HEK293 (cell line): ENCODE measurements at regions of chr22 and their contacts with region 1.

Region 1: GRCh38 chr22:20885557-20886323 is 26.9 kb downstream of the SNAP29 start:
- H3K4me3 ChIP-seq: no peak overlapping the region
- H3K27ac ChIP-seq: no peak overlapping the region; the same call in 1 of the 2 replicates
- H3K4me1 ChIP-seq: no peaks in the 10 kb centered on the region
- CTCF ChIP-seq: peak; percentile 99

Region 2: DNA sequence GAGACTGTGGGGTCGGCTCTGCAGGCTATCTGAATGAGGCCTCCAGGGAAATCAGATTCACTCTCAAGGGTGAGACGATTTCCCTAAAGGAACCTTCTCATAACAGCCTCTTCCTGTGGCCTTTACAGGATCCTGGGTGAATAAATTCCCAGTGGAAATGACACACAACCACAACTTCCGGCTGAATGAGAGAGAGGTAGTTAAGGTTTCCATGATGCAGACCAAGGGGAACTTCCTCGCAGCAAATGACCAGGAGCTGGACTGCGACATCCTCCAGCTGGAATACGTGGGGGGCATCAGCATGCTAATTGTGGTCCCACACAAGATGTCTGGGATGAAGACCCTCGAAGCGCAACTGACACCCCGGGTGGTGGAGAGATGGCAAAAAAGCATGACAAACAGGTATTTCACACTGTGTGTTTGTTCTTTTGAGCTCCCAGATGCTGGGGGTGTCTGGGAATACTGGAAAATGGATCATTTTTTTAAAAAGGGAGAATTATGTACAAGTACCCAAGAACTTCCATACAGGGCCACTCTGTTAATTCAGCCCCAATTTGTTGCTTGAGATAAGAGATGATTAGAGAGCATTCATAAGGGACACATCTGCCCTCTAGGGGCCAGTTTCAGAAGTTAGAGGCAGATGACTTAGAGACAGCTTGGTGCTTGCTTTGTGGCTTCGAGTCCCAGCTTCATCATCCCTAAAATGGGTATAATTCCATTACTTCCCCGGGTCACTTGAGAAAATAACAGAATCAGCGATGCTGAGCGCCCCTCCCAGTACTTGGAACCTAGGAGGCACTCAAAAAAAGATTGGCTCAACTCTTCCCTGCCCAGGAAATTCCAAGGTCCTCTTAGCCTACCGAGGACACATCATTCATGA is 101.7 kb before region 1 on chr22:
- CTCF ChIA-PET with region 1: interaction called, 10 read pairs
- POLR2A ChIA-PET with region 1: no interaction called
- H3K4me3 ChIP-seq: no peak overlapping the region
- H3K27ac ChIP-seq: no peak overlapping the region
- H3K4me1 ChIP-seq: no peaks in the 10 kb centered on the region
- CTCF ChIP-seq: peak; percentile 34; the same call in 1 of the 2 replicates

Region 3: GRCh38 chr22:20867179-20868024 is 18.3 kb before region 1 on chr22:
- CTCF ChIA-PET with region 1: interaction called, 31 read pairs
- POLR2A ChIA-PET with region 1: interaction called, 6 read pairs
- H3K4me3 ChIP-seq: no peak overlapping the region
- H3K27ac ChIP-seq: no peak overlapping the region
- H3K4me1 ChIP-seq: no peaks in the 10 kb centered on the region
- CTCF ChIP-seq: no peak

Region 4: DNA sequence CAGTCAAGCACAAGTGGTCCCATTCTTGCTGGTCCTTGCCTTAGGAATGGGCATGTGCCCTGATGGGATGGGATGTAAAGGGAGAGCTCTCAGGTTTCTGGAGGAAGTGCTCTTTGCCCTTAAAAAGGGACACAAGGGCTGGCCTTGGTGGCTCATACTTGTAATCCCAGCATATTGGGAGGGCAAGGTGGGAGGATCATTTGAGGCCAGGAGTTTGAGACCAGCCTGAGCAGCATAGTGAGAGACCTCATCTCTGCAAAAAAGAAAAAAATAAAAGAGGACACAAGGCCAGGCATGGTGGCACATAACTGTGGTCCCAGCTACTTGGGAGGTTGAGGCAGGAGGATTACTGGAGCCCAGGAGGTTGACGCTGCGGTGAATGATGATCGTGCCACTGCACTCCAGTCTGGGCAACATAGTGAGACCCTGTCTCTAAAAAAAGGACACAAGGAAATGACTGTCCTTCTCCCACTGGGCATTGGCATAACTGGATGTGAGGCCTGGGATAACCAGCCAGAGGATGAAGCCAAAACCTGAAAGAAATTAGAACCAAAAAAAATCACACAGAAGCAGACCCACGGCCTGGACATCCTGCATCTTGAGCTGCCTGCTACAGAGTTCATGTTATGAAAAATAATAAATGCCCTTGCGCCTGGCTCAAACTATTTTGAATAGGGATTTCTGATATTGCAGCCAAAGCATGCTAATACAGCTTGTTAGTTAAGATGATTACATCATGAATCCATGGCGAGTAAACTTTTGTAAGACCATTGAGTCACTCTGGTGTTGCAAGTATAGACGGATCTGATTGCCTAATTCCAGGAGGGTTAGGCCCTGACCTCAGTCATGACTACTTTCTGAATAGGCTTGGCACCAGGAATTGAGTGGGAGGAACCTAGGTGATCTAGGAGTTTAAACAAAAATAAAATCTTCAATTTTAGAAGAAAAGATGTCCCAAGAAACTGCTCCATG is 18.6 kb after region 1 on chr22:
- CTCF ChIA-PET with region 1: interaction called, 18 read pairs
- POLR2A ChIA-PET with region 1: no interaction called
- H3K4me3 ChIP-seq: no peak overlapping the region
- H3K27ac ChIP-seq: no peak overlapping the region
- H3K4me1 ChIP-seq: no peaks in the 10 kb centered on the region
- CTCF ChIP-seq: no peak

Region 5: DNA sequence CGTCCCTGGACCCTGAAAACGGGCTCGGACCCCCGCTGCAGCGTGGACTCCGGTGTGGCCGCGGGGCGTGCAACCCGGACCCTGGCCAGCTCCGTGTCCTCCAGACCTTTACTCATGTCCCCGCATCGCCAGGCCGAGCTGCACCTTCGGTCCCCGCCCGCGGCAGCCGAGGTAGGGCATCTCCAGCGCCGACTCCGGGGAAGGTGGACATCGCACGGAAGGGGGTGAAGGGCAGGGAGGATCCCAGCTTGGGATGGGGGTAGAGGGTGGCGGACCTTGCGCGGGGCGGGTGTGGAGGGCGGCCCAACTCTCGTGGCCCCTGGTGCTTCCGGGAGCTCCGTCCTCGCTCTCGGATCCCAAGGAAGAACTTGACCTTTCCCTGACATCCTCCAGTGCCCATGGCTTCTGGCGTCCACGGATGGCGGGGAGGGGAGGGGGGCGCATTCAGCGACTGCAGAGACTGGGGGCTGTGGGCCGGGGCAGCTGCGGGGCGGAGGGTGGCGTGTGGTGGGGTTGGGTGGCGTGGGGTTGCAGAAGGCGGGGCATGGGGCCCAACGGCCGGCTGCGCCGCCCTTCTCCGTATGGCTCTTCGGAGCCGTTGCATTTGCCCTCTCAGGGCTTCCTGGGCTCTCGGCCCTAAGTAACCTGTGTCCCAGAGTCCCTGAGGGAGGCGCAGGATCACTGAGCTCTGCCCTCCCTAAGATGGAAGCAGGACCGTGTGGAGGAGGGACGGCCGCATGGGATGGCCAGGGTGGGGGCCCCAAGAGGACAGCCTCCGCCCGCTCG is 71.8 kb after region 1 on chr22:
- CTCF ChIA-PET with region 1: interaction called, 22 read pairs
- POLR2A ChIA-PET with region 1: no interaction called
- H3K4me3 ChIP-seq: peak overlapping the region; percentile 50
- H3K27ac ChIP-seq: no peak overlapping the region
- H3K4me1 ChIP-seq: no peaks in the 10 kb centered on the region
- CTCF ChIP-seq: no peak

Region 6: GRCh38 chr22:21001560-21002325 is 116.0 kb after region 1 on chr22 and contains the start of gene THAP7:
- CTCF ChIA-PET with region 1: interaction called, 6 read pairs
- POLR2A ChIA-PET with region 1: interaction called, 10 read pairs
- H3K4me3 ChIP-seq: peak within 1 kb of the TSS; percentile 83
- H3K27ac ChIP-seq: peak within 1 kb of the TSS; percentile 65
- H3K4me1 ChIP-seq: no peaks in the 10 kb centered on the region
- CTCF ChIP-seq: 0 out of 2 replicates have a peak, but pooled peaks have one; percentile 34